H1 (cell line): ENCODE measurements at regions of chr10 and their contacts with region 1.

Region 1: DNA sequence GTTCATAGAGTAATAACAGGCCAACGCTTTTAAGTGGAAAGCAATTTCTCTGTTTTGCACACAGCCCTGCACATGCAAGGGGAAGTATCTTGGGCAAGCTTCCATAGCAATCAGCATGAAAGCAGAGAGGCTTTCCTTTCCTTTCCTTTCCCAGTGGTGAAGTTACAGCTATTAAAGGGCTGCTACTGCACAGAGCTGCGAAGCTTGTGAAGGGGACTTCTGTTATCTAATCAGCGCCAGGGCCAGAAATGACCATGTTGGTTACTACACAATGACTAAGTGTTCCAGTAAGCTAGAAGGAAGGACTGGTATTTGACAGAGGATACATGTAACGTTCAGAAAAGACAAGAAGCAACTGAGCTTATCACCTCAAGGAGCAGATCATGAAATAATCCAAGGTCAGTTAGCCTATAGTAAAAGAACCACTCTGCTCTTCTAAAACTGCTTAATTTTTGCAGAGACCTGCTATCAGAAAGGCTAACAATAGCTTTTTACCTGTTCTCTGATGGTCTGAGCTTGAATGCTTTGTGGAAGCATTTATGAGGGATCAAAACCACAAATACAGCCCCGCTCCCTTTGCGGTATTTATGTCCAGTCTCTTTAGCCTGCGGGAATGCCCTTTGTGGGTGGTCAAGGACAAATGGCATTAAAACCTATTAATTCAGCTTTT is 45.9 kb downstream of the SGMS1 start:
- DNase-seq: no peak
- H3K4me3 ChIP-seq: no peak overlapping the region
- H3K27ac ChIP-seq: no peak overlapping the region
- H3K4me1 ChIP-seq: peaks cover 4 to 8% (median 5%) of the 10 kb centered on the region in 4 experiments; a peak in 4 of 7 replicates
- H3K27me3 ChIP-seq: no peaks in the 10 kb centered on the region
- CTCF ChIP-seq: no peak
- EP300 ChIP-seq: no peak
- POLR2A ChIP-seq: no peak
- RAD21 ChIP-seq: no peak

Region 2: DNA sequence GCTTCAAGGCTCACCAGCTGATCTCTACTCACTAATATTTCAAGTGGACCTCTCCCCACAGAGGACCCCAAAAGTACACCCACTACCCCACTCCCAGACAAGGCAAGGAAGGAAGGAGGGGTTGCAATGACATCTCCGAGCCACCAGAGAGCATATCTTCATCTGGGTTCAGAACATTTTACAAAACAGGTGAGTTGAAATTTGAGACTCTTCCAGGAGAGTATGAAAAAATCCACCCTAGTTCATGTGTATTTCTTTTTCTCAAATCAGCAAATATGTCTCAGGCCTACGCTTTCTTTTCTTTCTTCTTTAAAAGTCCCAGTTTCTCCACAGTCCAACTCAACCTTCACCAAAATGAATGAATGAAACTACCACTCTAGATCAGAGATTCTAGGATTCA is 16.0 kb before region 1 on chr10:
- CTCF ChIA-PET with region 1: interaction called, 29 read pairs
- POLR2A ChIA-PET with region 1: no interaction called
- DNase-seq: no peak
- H3K4me3 ChIP-seq: no peak overlapping the region
- H3K27ac ChIP-seq: no peak overlapping the region
- H3K4me1 ChIP-seq: peaks cover 0 to 12% (median 6%) of the 10 kb centered on the region in 4 experiments; a peak in 5 of 7 replicates
- H3K27me3 ChIP-seq: no peaks in the 10 kb centered on the region
- CTCF ChIP-seq: peak; percentile 60 to 66 (median 61)
- EP300 ChIP-seq: no peak
- POLR2A ChIP-seq: no peak
- RAD21 ChIP-seq: peak; percentile 64 to 73

Region 3: GRCh38 chr10:50614444-50615137 is 36.8 kb after region 1 on chr10:
- CTCF ChIA-PET with region 1: interaction called, 30 read pairs
- POLR2A ChIA-PET with region 1: no interaction called
- DNase-seq: peak in 1 of 2 experiments; percentile 66
- H3K4me3 ChIP-seq: no peak overlapping the region
- H3K27ac ChIP-seq: no peak overlapping the region
- H3K4me1 ChIP-seq: peaks cover 6 to 30% (median 16%) of the 10 kb centered on the region in 4 experiments
- H3K27me3 ChIP-seq: no peaks in the 10 kb centered on the region
- CTCF ChIP-seq: peak in 2 of 3 experiments; percentile 46 to 71; a peak in 3 of 4 replicates
- EP300 ChIP-seq: no peak
- POLR2A ChIP-seq: no peak
- RAD21 ChIP-seq: peak; percentile 52 to 65